OCI-LY7 (cell line): ENCODE measurements at regions of chr17 and their contacts with region 1.

Region 1: DNA sequence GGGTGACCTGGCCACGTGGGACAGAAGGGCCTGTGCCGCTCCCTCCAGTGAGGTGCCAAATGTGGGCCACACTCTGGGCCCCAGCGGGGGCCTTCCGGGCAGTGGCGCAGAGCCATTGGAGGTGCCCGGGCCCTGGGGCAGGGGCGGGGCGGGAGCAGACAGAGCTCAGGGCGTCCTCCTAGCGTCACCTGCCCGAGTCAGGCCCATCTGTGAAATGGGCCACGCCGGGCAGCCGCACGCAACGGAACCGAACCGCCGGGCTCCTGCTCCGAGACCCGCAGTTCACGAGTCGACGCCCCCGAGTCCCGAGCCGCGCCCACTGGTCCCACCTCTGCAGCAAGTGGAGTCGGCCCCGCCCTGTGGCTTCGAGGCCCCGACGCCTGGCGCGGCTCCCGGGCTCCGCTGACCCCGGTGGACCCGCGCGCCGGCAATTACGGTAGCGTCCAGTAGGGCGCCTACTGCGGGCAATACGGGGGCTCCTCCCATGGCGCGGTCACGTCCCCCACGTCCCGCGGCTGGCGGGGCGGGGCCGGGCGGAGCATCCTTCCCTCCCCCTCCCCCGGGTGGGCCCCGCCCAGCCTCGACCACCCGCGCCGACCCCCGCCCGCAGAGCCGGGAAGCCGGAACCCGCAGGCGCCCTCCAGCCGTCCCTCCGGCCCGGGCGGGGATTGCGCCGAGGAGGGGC is 1.9 kb downstream of the SLC16A3 start:
- DNase-seq: no peak
- H3K4me3 ChIP-seq: peak overlapping the region; percentile 10
- H3K27ac ChIP-seq: no peak overlapping the region
- H3K4me1 ChIP-seq: peaks cover 43% of the 10 kb centered on the region
- CTCF ChIP-seq: peak; percentile 37; the same call in 1 of the 2 replicates

Region 2: GRCh38 chr17:81440876-81441244 is 789.9 kb before region 1 on chr17:
- CTCF ChIA-PET with region 1: no interaction called
- POLR2A ChIA-PET with region 1: no interaction called
- intact Hi-C with region 1: no loop called
- DNase-seq: peak; percentile 81
- H3K4me3 ChIP-seq: no peak overlapping the region
- H3K27ac ChIP-seq: no peak overlapping the region
- H3K4me1 ChIP-seq: peaks cover 9% of the 10 kb centered on the region
- CTCF ChIP-seq: peak; percentile 95

Region 3: DNA sequence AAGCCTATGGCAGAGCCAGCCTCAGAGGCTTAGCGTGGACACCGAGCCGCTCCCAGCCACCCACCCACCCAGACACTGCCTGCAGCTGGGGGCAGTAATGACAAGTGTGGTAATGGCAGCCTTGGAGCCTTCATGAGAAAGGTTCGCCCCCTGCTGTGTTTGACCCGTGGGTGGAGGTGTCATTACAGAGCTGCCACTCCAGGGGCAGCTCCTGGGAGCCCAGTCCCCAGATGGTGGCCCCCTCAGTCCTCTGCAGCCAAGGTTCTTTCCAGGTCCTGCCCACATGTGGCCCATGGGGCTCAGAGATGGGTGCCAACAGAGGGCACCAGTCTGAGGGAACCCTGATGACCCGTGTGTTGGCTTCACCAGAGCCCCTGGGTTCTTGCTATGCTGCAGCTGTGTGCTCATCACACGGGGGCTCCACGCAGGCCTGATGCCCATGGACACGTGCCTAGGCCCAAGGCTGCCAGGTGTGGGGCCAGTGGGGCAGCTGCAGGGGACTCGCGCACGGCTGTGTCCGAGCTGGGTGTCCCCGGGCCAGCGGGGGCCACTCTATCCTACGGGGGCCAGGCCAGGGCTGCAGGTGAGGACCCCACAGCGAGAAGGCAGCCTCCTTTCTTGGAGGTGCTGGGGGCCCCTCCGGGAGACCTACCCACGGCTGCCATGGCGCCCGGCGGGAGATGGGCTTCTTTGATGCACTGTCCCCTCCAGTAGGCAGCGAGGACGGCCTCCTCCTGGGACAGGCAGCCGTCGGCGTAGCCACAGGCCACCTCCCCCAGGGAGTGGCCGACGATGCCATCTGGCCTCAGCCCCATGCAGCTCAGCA is 140.8 kb before region 1 on chr17:
- CTCF ChIA-PET with region 1: no interaction called
- POLR2A ChIA-PET with region 1: no interaction called
- intact Hi-C with region 1: no loop called
- DNase-seq: no peak
- H3K4me3 ChIP-seq: no peak overlapping the region
- H3K27ac ChIP-seq: no peak overlapping the region
- H3K4me1 ChIP-seq: no peaks in the 10 kb centered on the region
- CTCF ChIP-seq: no peak

Region 4: DNA sequence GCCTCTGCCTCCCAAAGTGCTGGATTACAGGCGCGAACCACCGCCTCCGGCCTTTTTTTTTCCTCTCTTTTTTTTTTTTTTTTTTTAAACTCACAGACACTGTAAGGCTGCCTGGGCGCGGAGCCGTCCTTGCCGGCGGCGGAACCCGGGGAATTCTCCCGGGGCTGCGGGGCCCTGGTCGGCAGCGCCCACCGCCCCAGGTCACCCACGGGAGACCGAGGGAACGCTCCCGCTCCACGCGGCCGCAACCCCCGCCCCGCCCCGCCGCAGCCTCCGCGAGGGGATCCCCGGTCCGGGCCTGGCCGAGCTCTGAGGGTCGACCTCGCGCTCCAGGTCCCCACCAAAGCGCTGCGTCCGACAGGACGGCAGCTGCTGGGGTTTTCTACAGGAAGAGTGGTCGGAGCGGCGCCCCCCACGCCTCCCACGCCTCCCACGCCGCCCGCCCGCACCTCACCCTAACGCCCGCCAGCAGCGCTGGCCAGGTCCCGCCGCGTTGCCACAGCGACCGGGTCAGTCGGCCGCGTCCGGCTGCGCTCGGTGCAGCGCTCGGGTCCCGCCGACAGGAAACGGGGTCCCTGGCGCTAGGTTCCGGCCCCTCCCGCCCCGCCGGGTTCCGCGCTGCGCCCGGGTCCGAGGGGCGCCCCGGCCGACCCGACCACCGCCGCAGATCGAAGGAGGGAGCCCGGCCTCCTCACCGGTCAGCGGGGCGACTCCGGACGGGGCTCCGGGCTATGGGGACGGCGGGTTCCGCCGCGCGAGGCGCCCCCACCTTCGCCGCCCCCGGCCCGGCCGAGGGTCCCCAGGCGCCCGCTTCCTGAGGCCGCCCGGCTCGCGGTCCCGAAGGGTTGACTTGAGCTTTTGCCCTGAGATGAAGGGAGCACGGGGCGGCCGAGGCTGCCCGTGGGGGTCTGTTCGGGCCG is 18.2 kb before region 1 on chr17 and contains the start of gene CCDC57:
- CTCF ChIA-PET with region 1: interaction called, 3 read pairs
- POLR2A ChIA-PET with region 1: no interaction called
- intact Hi-C with region 1: loop called (anchors 2 kb)
- DNase-seq: peak; percentile 90
- H3K4me3 ChIP-seq: peak within 1 kb of the TSS; percentile 86
- H3K27ac ChIP-seq: no peak within 1 kb of the TSS
- H3K4me1 ChIP-seq: peaks cover 19% of the 10 kb centered on the region
- CTCF ChIP-seq: no peak
- total RNA-seq, gene CCDC57: 30.7 and 34.5 TPM in 2 replicates

Region 5: GRCh38 chr17:82314727-82315605 is 84.2 kb after region 1 on chr17:
- CTCF ChIA-PET with region 1: no interaction called
- POLR2A ChIA-PET with region 1: no interaction called
- intact Hi-C with region 1: no loop called
- DNase-seq: no peak
- H3K4me3 ChIP-seq: no peak overlapping the region
- H3K27ac ChIP-seq: no peak overlapping the region
- H3K4me1 ChIP-seq: no peaks in the 10 kb centered on the region
- CTCF ChIP-seq: no peak